ENCODE measurements at regions of chr20 and their contacts with region 1.

Region 1: DNA sequence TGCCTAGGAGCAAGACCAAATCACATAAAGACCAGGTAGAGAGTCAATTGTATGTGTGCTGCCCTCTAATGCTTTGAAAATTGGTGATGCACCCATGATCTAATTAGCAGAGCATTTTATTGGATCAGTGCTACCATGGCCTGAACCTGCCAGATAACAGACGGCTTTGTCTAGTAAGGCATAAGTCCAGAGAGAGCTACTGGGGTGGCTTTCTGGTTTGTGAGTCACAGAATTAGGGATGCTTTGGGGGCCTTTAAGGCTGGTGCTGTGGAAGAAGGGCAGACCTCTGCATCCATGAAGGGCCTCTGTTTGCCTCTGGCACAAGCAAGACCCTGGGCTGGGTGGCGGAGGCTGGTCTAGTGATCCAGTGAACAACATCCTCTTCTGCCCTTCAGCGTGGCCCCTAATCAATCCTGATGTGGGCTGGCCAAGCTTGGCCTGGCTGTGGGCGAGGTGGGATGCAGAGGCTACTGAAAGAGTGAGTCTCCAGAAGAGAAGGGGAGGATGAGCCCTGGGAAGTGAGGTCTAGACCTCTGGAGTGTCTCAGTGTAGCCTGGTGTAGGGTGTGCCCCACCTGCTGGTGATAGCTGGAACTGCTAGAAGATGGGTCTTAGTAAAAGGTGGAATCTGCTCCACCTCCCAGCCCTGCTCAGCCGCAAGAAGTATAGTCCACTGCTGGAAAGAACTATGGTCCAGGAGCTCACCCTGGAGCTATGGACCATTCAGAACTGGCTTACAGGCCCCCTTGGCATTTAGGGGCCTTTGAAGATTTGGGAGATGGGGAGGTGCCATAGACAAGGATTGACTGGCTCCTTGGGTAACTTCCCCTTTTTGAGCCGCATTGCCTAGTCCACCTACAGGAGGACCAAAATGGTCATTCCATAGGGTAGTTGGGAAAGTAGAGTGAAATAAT is 36.7 kb upstream of the AAR2 start:
- DNase-seq: peak; percentile 76
- ATAC-seq: peak; percentile 70

Region 2: DNA sequence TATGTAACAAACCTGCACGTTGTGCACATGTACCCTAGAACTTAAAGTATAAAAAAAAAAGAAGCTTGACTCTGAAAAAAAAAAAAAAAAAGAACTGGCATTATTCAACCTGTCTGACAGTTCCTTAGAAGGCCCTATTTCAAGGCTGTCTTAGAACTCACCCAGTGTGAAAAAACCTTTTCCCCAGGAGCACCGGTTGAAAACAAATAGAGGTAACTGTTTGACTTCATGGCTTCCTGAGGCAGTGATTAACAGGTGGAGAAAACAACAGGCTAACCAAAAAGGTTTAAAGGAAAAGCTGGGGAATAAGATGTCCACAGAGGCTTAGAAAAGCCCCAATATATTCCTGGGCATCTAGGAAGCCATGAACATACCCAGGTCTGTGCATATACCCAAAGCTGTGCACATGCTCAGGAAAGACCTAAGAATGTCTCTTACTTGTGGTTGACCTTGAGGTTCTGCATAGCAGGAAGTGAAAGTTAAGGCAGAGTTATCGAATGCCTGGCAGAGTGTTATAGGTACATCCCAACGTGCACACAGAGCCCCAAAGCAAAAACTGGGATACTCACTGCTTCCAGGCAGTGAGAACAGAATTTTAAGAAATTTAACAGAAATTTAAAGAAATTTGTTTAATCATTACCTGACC is 794.9 kb before region 1 on chr20:
- intact Hi-C with region 1: no loop called
- DNase-seq: no peak
- ATAC-seq: no peak

Region 3: DNA sequence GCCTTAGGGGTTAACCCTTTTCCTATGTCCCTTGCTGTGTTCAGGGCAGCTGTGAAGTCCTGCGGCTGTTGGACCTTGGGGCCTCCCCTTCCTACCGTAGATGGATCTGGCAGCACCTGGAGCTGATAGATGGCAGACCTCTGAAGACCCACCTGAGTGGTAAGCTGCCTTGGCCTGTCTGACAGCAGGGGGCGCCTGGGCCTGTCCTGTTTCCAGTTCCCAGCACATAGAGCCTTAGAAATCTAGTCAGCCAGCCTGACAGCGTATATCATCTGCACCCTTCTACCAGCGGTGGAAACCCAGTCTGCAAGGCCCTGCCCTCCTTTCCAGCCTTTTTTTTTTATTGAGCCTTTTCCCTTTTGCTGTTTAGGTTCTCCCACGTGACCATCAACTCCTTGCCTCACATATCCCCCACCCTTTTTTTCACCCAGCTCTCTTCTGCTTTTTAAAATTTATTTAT is 204.6 kb before region 1 on chr20:
- intact Hi-C with region 1: loop called (anchors 1 kb)
- DNase-seq: peak; percentile 90
- ATAC-seq: peak; percentile 96

Region 4: DNA sequence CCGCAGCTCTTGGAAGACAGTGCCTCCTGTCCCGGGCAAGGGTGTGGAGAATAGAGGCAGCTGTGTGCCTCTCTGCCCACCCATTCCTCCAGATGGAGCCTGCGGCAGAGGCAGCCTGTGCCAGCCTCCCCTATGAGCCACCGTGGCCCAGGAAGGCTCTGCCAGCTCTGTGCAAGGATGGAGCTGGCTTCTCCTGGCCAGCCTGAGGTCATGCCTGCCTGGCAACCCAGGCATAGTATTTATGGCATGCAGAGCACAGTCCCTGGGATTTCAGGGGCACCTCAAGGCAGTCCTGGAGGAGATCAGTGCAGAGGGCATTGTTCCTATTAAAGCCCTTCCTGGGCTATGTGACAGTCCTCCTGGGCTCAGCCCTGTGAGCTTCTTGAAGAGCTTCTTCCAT is 43.6 kb before region 1 on chr20:
- intact Hi-C with region 1: loop called (anchors 2 kb)
- DNase-seq: no peak
- ATAC-seq: no peak

Region 5: GRCh38 chr20:36439040-36439730 is 239.6 kb after region 1 on chr20:
- intact Hi-C with region 1: loop called (anchors 1 kb)
- DNase-seq: peak; percentile 78
- ATAC-seq: peak; percentile 60

Measured in Right ventricle myocardium inferior (tissue), 1 donor.